ENCODE measurements at regions of chrX and their contacts with region 1.

Region 1: GRCh38 chrX:19709812-19710518 is 177.4 kb downstream of the SH3KBP1 start:
- DNase-seq: peak; percentile 95
- H3K4me3 ChIP-seq: no peak overlapping the region
- H3K27ac ChIP-seq: peak overlapping the region; percentile 90
- H3K4me1 ChIP-seq: peaks cover 17% of the 10 kb centered on the region
- H3K27me3 ChIP-seq: no peaks in the 10 kb centered on the region
- CTCF ChIP-seq: no peak

Region 2: GRCh38 chrX:19040373-19040772 is 669.6 kb before region 1 on chrX:
- CTCF ChIA-PET with region 1: no interaction called
- dilution Hi-C with region 1: no loop called
- in situ Hi-C with region 1: no loop called
- intact Hi-C with region 1: no loop called
- DNase-seq: no peak
- H3K4me3 ChIP-seq: no peak overlapping the region
- H3K27ac ChIP-seq: no peak overlapping the region
- H3K4me1 ChIP-seq: no peaks in the 10 kb centered on the region
- H3K27me3 ChIP-seq: no peaks in the 10 kb centered on the region
- CTCF ChIP-seq: peak; percentile 12 to 36

Region 3: GRCh38 chrX:19673375-19674040 is 36.5 kb before region 1 on chrX:
- CTCF ChIA-PET with region 1: no interaction called
- dilution Hi-C with region 1: no loop called
- in situ Hi-C with region 1: no loop called
- intact Hi-C with region 1: loop called (anchors 1 kb)
- DNase-seq: peak; percentile 80
- H3K4me3 ChIP-seq: no peak overlapping the region
- H3K27ac ChIP-seq: peak overlapping the region; percentile 68
- H3K4me1 ChIP-seq: peaks cover 30% of the 10 kb centered on the region
- H3K27me3 ChIP-seq: no peaks in the 10 kb centered on the region
- CTCF ChIP-seq: no peak

Measured in mammary epithelial cell (primary cell).